ENCODE measurements at regions of chr17 and their contacts with region 1.

Region 1: DNA sequence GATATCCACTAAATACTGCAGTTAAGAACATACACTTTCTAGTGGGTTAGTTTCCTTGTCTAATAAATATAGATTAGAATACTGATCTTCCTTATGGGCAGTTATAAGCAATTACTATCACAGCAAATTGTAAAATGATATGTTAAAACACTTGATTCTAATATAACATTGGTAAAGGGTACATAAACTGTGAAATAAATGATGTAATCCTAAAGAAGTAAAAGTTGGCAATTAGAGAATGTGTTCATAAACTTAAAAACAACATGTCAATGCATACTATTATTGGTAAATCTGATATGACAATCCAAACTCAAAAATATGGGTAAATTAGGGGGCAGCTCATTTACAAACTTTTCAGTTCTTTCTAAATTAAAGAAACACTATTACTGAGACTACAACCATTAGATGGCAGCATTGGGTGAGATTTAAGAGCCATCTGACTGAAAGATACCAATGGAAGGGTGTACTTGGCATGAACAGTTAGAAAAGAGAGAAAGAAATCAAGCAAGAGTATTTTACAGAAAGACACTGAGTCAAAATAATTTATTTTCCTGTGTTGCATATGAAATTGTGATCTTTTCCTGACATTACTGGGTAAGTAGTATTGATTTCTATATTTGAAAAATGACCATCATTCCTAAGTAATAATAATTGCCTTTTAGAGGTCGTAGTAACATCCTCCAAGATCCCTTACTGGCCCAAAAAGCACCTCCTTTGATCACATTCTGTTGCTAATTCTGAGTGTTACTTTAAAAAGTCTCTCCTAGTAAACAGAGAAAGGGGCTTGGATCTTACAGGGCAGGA is 119.6 kb downstream of the SPAG9 start:
- DNase-seq: no peak
- H3K4me3 ChIP-seq: no peak overlapping the region
- H3K27ac ChIP-seq: no peak overlapping the region
- H3K4me1 ChIP-seq: no peaks in the 10 kb centered on the region
- H3K27me3 ChIP-seq: no peaks in the 10 kb centered on the region
- CTCF ChIP-seq: peak in 5 of 6 experiments; percentile 39 to 66 (median 54)
- POLR2A ChIP-seq: no peak

Region 2: DNA sequence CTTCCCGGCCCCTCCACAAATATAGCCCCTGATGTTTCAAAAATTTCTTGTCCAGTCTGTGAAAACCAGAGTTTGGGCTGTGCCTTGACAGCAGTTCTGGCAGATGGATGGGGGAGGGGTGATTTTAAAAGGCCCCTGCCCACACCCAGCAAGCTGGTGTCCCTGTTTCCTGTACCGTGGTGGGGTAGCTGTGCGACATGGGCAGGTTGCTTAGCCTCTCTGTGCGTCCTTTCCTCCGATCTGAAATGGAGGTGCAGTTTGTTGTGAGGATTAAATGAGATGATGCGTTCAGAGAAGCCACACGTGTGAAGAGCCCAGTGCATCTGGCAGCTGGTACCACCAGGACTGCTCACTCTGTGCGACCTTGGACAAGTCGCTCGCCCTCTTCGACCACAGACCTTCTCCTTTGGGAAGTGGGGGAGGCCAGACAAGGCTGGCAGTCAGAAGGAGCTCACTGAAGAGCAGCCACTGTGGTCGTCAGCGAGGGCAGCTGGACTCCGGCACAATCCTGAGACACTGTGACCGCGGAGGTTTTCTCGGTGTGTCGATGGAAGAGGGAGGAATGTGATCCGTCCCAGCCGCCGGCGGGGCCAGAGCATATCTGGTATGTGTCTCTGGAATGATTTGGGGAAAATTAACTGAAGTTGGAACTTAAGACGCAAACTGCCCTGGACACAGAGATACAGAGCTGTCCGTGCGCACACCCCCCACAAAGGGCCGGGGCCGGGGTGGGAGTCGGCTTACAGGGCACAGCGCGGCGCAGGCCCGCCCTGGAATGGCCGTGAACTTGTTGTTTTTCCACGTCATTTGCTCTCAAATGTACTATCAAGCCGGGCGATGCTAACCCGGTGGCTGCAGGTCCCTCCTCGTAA is 166.4 kb before region 1 on chr17:
- intact Hi-C with region 1: no loop called
- DNase-seq: no peak
- H3K4me3 ChIP-seq: peak overlapping the region in 3 of 4 donors; percentile 9 to 45 (median 22)
- H3K27ac ChIP-seq: no peak overlapping the region
- H3K4me1 ChIP-seq: peaks cover 0 to 35% (median 0%) of the 10 kb centered on the region in 3 donors
- H3K27me3 ChIP-seq: peaks cover 0 to 24% (median 0%) of the 10 kb centered on the region in 4 donors
- CTCF ChIP-seq: no peak
- POLR2A ChIP-seq: no peak

Region 3: GRCh38 chr17:51056813-51057510 is 55.9 kb after region 1 on chr17:
- intact Hi-C with region 1: no loop called
- DNase-seq: no peak
- H3K4me3 ChIP-seq: no peak overlapping the region
- H3K27ac ChIP-seq: peak overlapping the region in 3 of 4 donors; percentile 54 to 74 (median 62)
- H3K4me1 ChIP-seq: peaks cover 0 to 26% (median 3%) of the 10 kb centered on the region in 3 donors
- H3K27me3 ChIP-seq: no peaks in the 10 kb centered on the region
- CTCF ChIP-seq: peak in 5 of 6 experiments; percentile 34 to 55 (median 43)
- POLR2A ChIP-seq: no peak

Region 4: GRCh38 chr17:51153210-51154072 is 152.4 kb after region 1 on chr17 and contains the start of gene NME1:
- intact Hi-C with region 1: loop called (anchors 10 kb)
- DNase-seq: peak; percentile 89
- H3K4me3 ChIP-seq: peak within 1 kb of the TSS; percentile 49 to 76 (median 67)
- H3K27ac ChIP-seq: peak within 1 kb of the TSS; percentile 82 to 92 (median 90)
- H3K4me1 ChIP-seq: peaks cover 13 to 44% (median 24%) of the 10 kb centered on the region in 3 donors
- H3K27me3 ChIP-seq: no peaks in the 10 kb centered on the region
- CTCF ChIP-seq: peak; percentile 65 to 95 (median 77)
- POLR2A ChIP-seq: peak in 1 of 4 donors; percentile 39
- total RNA-seq, gene NME1: 56.9 to 138 (median 101) TPM

Measured in esophagus squamous epithelium (tissue), 5 donors.